T-cell (primary cell): ENCODE measurements at regions of chr1 and their contacts with region 1.

Region 1: DNA sequence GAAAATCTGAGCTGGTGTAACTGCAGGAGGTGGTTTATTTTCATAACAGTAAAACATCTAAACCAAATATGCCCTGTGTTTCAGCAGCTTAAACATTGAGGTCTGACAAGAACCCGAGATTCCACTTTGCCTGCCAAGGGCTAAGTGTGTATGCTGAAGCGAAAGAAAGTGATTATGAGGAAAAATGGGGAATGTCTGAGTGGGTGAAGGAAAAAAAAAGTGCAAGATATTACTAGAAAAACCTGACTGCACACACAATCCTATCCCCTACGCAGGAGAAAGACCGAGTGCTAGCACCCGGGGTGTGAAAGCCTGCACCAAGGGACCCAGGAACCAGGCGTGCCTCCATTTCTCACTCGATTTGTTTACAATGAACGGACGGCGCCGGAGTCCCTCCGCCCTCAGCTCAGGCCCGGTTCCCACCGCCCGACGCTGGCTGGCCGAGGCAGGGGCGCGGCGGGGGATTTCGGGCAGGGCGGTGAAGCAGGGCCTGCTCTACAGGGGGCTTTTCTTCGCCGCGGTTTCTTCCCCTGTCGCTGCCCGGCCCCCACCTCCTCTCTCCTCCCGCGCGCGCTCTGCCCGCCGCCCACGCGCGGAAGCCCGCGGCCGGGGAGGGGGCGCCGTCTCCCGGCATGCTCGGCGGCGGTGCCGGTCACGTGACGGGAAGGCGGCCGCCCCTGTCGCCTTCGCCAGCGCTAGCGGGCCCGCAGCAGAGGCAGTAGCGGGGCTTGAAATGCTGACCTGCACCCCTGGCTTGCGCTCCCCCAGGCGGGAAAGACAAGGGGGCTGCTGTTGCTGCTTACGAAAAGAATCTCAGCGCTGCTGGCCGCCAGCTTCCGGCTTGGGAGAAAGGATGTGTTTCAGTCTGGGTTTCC is 35.9 kb downstream of the ITPKB start:
- DNase-seq: peak; percentile 66 to 92 (median 82)
- ATAC-seq: peak; percentile 79 to 94 (median 90)
- H3K4me3 ChIP-seq: peak overlapping the region; percentile 55 to 58
- H3K4me3 Mint-ChIP-seq: peak overlapping the region; percentile 76 to 84 (median 76)
- H3K27ac ChIP-seq: peak overlapping the region; percentile 91
- H3K27ac Mint-ChIP-seq: peak overlapping the region; percentile 89 to 93
- H3K4me1 ChIP-seq: peaks cover 53 to 63% of the 10 kb centered on the region in 2 experiments
- H3K4me1 Mint-ChIP-seq: peaks cover 83 to 92% (median 84%) of the 10 kb centered on the region in 3 donors
- H3K27me3 ChIP-seq: no peaks in the 10 kb centered on the region
- H3K27me3 Mint-ChIP-seq: no peaks in the 10 kb centered on the region

Region 2: DNA sequence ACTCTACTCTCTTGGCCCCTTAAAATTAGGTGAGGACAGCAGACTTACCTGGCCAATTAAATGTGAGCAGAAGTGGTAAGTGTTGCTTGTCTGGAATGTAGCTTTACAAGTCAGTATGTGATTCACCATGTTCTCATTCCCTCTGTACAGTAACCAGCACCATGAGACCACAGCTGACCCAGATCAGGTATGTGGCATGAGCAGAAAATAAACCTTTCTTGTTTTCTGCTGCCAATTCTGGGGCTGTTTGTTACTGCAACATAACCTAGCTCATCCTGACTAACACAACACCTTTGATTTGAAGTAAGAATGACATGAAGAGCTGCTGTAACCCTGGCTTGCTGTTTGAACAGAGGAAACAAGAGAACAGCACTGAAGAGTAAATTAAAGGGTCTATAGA is 11.0 kb after region 1 on chr1:
- CTCF ChIA-PET with region 1: interaction called in 1 of 2 experiments, 5 read pairs
- POLR2A ChIA-PET with region 1: interaction called in 1 of 2 experiments, 15 read pairs
- DNase-seq: no peak
- ATAC-seq: no peak
- H3K4me3 ChIP-seq: no peak overlapping the region
- H3K4me3 Mint-ChIP-seq: peak overlapping the region in 1 of 3 donors; percentile 83
- H3K27ac ChIP-seq: peak overlapping the region; percentile 64
- H3K27ac Mint-ChIP-seq: peak overlapping the region; percentile 94 to 97
- H3K4me1 ChIP-seq: peaks cover 75 to 88% of the 10 kb centered on the region in 2 experiments
- H3K4me1 Mint-ChIP-seq: peaks cover 98 to 99% (median 98%) of the 10 kb centered on the region in 3 donors
- H3K27me3 ChIP-seq: no peaks in the 10 kb centered on the region
- H3K27me3 Mint-ChIP-seq: no peaks in the 10 kb centered on the region

Region 3: DNA sequence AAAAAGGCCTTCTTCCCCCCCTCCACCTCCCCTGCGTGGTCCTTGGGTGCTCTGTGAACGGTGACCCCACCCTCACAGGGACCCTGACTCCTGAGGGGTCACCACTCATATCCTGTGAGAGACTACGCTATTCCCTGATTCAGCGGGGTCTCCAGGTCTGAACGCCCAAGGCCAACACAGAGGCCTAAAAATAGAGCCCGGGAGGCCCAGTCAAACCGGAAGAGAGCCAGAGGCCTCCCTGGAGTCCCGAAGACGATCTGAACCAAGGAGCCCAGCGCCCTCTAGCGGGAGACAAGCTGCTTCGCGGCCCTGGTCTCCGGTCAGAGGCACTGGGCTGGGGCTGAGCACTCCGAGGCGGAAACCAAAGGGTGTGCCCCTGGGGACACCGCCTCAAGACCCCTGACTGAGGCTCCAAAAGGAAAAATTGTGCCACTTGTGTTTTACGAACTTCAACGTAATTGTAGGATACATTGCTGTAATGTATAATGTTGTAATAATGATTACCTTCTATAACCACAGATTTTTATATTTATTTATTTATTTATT is 124.8 kb after region 1 on chr1:
- CTCF ChIA-PET with region 1: interaction called in 1 of 2 experiments, 13 read pairs
- POLR2A ChIA-PET with region 1: no interaction called
- DNase-seq: peak; percentile 80 to 97 (median 91)
- ATAC-seq: peak; percentile 94 to 99 (median 98)
- H3K4me3 ChIP-seq: peak overlapping the region; percentile 28 to 53
- H3K4me3 Mint-ChIP-seq: peak overlapping the region; percentile 51 to 65 (median 56)
- H3K27ac ChIP-seq: peak overlapping the region; percentile 64
- H3K27ac Mint-ChIP-seq: peak overlapping the region; percentile 75 to 80
- H3K4me1 ChIP-seq: peaks cover 16 to 17% of the 10 kb centered on the region in 2 experiments
- H3K4me1 Mint-ChIP-seq: peaks cover 22 to 44% (median 23%) of the 10 kb centered on the region in 3 donors
- H3K27me3 ChIP-seq: peaks cover 0 to 3% of the 10 kb centered on the region in 2 experiments
- H3K27me3 Mint-ChIP-seq: no peaks in the 10 kb centered on the region